ENCODE measurements at regions of chr20 and their contacts with region 1.

Region 1: GRCh38 chr20:25623736-25624499 is at the start of gene NANP:
- DNase-seq: peak; percentile 92
- ATAC-seq: peak; percentile 96
- H3K4me3 ChIP-seq: peak within 1 kb of the TSS; percentile 83 to 95
- H3K27ac ChIP-seq: peak within 1 kb of the TSS; percentile 100
- H3K4me1 ChIP-seq: peaks cover 13% of the 10 kb centered on the region; the same call in 1 of the 2 replicates
- H3K27me3 ChIP-seq: no peaks in the 10 kb centered on the region
- CTCF ChIP-seq: no peak; the same call in 1 of the 2 replicates
- total RNA-seq, gene NANP: 7.3 TPM

Region 2: DNA sequence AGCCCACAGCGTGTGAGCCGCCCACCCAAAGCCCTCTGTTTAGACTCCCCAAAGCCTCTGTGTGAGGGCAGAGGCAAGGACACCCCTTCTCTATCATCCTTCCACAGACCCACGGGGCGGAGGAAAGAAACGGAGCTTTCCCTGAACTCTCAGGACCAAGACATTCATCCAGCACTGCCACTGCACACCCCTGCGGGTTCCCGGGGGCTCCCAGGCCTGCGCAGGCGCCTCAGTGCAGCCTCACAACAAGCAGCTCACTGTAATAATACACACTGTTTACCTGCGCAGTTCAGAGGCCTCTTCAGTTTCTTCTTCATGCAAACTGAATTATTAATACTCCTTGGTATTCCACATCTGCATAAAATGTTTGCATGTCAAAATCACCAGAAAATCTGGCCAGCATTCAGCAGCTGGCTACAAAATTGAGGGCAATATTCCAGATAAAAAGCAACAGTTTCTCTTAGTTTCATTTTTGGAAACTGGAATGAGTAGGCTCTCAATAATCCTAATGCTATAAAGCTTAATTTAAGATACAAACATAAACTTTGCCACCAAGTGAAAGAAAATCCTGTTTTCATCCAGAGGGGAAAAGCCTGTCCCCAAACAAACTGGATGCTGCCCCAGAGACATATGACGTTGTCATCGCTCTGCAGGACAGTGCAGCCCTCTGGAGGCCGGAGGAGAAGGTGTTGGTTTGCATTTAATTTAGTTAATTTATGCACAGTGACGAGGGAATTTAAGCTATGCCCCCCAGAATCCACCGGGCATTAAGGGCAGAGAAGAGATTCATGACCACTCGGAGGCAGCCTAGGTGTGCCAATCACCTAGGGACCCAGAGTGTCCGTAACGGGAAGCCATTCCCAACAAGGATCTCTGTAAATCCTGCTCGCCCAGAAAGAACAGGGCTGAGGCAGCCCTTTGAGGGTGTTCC is 83.9 kb before region 1 on chr20:
- CTCF ChIA-PET with region 1: no interaction called
- POLR2A ChIA-PET with region 1: no interaction called
- in situ Hi-C with region 1: no loop called
- intact Hi-C with region 1: no loop called
- DNase-seq: no peak
- ATAC-seq: peak; percentile 51; the same call in 1 of the 2 replicates
- H3K4me3 ChIP-seq: no peak overlapping the region
- H3K27ac ChIP-seq: no peak overlapping the region
- H3K4me1 ChIP-seq: no peaks in the 10 kb centered on the region
- H3K27me3 ChIP-seq: no peaks in the 10 kb centered on the region
- CTCF ChIP-seq: no peak; the same call in 1 of the 2 replicates

Region 3: DNA sequence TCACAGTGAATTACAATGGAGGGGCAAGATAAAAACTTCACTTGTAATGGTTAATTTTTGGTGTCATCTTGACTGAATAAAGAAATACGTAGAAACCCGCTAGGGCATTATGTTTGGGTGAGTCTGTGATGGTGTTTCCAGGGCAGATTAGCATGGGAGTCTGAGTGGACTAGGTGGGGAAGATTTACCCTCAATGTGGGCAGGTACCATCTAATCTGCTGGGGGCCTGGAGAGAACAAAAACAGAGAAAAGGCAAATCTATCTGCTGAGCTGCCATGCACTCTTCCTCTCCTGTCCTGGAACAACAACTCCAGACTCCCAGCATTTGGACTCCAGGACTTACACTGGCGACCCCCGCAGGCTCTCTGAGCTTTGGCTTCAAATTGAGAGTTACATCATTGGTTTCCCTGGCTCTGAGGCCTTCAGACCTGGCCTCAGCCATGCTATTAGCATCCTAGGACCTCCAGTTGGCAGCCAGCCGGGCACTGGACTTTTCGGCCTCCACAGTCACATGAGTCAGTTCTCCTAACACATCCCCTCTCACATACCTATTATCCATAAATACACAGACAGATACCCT is 58.2 kb before region 1 on chr20:
- CTCF ChIA-PET with region 1: no interaction called
- POLR2A ChIA-PET with region 1: interaction called, 14 read pairs
- in situ Hi-C with region 1: no loop called
- intact Hi-C with region 1: no loop called
- DNase-seq: no peak
- ATAC-seq: no peak
- H3K4me3 ChIP-seq: no peak overlapping the region
- H3K27ac ChIP-seq: no peak overlapping the region
- H3K4me1 ChIP-seq: no peaks in the 10 kb centered on the region
- H3K27me3 ChIP-seq: no peaks in the 10 kb centered on the region
- CTCF ChIP-seq: no peak

Region 4: GRCh38 chr20:25669826-25670422 is 46.0 kb after region 1 on chr20:
- CTCF ChIA-PET with region 1: interaction called, 12 read pairs
- POLR2A ChIA-PET with region 1: no interaction called
- in situ Hi-C with region 1: no loop called
- intact Hi-C with region 1: no loop called
- DNase-seq: no peak
- ATAC-seq: peak; percentile 71; the same call in 1 of the 2 replicates
- H3K4me3 ChIP-seq: no peak overlapping the region
- H3K27ac ChIP-seq: no peak overlapping the region
- H3K4me1 ChIP-seq: no peaks in the 10 kb centered on the region
- H3K27me3 ChIP-seq: no peaks in the 10 kb centered on the region
- CTCF ChIP-seq: no peak

Measured in Panc1 (cell line).